Lower lobe of right lung (tissue), 2 donors: ENCODE measurements at regions of chr1 and their contacts with region 1.

Region 1: GRCh38 chr1:23098463-23099170 is 70.0 kb downstream of the LUZP1 start:
- DNase-seq: no peak
- ATAC-seq: peak; percentile 79 to 84
- H3K4me3 ChIP-seq: no peak overlapping the region
- H3K27ac ChIP-seq: no peak overlapping the region
- H3K4me1 ChIP-seq: peaks cover 51% of the 10 kb centered on the region
- H3K27me3 ChIP-seq: no peaks in the 10 kb centered on the region
- CTCF ChIP-seq: peak; percentile 88

Region 2: GRCh38 chr1:23184212-23184934 is 85.8 kb after region 1 on chr1:
- intact Hi-C with region 1: loop called (anchors 5 kb)
- DNase-seq: no peak
- ATAC-seq: peak; percentile 29 to 64
- H3K4me3 ChIP-seq: peak overlapping the region; percentile 47
- H3K27ac ChIP-seq: no peak overlapping the region
- H3K4me1 ChIP-seq: peaks cover 8% of the 10 kb centered on the region
- H3K27me3 ChIP-seq: no peaks in the 10 kb centered on the region
- CTCF ChIP-seq: peak; percentile 78

Region 3: DNA sequence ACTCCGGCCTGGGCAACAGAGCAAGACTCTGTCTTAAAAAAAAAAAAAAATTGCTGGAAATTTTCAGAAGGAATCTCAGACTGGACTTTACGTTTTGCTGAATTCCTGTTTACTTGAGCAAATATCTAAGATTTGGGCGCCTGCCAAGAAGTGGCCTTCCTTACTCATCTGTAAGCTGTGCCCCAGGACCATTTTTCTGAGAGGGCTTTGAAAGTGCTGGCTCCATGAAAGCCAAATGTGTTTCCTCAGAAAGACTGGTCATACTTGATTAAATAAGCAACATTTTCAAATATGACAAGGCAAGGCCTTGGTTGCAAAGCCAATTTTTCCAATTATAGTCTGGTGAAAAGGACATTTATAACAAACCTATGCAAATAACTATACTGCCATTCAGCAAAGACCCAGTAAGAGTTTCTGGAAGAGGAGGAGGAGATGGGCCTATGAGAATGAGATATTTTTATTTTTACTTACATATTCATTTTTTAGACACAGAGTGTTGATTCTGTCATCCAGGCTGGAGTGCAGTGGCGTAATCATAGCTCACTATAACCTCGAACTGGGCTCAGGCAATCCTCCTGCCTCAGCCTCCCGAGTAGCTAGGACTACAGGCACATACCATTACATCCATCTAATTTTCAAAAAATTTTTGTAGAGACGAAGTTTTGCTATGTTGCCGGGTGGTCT is 175.0 kb after region 1 on chr1:
- intact Hi-C with region 1: no loop called
- DNase-seq: no peak
- ATAC-seq: no peak
- H3K4me3 ChIP-seq: no peak overlapping the region
- H3K27ac ChIP-seq: no peak overlapping the region
- H3K4me1 ChIP-seq: peaks cover 3% of the 10 kb centered on the region
- H3K27me3 ChIP-seq: no peaks in the 10 kb centered on the region
- CTCF ChIP-seq: no peak